ENCODE measurements at regions of chr4 and their contacts with region 1.

Region 1: DNA sequence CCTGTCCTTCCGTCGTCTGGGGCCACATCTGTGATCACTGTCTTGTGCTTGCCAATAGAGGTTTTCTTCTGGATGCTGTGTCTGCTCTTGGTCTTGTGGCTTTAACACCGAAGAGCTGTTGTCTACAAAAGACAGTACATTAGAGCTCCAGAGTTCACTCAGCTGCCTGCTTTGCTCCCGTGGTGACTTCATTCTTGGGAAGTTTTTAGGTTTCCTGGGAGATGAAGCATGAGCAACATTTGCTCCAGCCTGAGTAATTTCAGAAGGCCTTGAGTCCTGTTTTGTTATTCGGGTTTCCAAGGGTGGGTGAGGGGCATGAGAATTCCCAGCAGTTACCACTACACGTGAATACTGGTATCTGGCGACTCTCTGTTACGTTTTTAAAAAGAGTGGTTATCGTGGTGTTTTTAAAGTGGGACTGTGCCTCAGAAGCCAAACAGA is 189.2 kb downstream of the SHROOM3 start:
- DNase-seq: peak; percentile 41
- H3K4me3 Mint-ChIP-seq: peak overlapping the region; percentile 31
- H3K27ac Mint-ChIP-seq: peak overlapping the region; percentile 93
- H3K4me1 Mint-ChIP-seq: peaks cover 37% of the 10 kb centered on the region
- H3K27me3 Mint-ChIP-seq: no peaks in the 10 kb centered on the region
- CTCF ChIP-seq: no peak

Region 2: DNA sequence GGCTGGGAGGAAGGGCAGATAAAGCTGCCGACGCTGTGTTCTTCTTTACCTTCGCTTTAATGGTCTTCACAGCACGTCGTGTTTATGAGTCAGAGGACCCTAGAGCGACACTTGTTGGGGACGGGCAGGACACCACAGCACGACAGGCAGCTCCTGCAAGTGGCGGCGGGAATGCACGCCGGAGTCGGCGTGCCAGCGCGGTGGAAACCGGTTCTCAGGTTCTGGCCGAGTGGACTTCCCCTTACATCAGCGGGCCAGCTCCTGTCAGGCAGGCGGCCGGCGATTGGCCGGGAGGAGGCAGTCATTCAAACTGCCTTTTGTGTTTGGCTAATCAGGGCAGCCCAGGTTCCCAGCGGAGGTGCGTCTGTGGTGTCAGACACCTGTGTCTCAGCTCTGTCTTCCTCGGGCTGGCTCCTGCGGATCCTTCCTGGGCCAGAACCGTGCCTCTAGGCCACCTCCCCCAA is 38.3 kb before region 1 on chr4:
- CTCF ChIA-PET with region 1: interaction called, 5 read pairs
- POLR2A ChIA-PET with region 1: interaction called, 4 read pairs
- intact Hi-C with region 1: loop called (anchors 5 kb)
- DNase-seq: peak; percentile 85
- H3K4me3 Mint-ChIP-seq: peak overlapping the region; percentile 72
- H3K27ac Mint-ChIP-seq: peak overlapping the region; percentile 70
- H3K4me1 Mint-ChIP-seq: peaks cover 29% of the 10 kb centered on the region
- H3K27me3 Mint-ChIP-seq: no peaks in the 10 kb centered on the region
- CTCF ChIP-seq: peak; percentile 17

Region 3: DNA sequence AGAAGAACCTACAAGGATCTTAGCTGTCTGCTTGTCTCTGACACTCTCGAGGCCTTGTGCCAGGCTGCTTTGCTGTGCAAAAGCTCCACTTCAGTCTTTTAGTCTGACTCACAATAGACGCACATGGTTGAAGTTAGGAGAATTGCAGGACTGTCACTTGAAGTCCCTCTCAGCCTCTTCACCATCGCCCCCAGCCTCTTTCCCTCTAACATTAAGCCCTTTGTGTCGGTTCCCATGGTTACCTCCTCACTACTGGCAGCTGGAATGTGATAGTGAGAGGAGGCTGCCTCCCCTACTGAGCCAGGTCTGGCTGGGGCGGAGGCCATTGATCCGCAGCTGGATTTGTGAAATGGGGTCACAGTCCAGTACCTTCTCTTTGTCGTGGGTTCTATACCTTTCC is 71.8 kb after region 1 on chr4:
- CTCF ChIA-PET with region 1: no interaction called
- POLR2A ChIA-PET with region 1: no interaction called
- intact Hi-C with region 1: no loop called
- DNase-seq: no peak
- H3K4me3 Mint-ChIP-seq: no peak overlapping the region
- H3K27ac Mint-ChIP-seq: no peak overlapping the region
- H3K4me1 Mint-ChIP-seq: peaks cover 31% of the 10 kb centered on the region
- H3K27me3 Mint-ChIP-seq: no peaks in the 10 kb centered on the region
- CTCF ChIP-seq: no peak

Measured in MCF 10A (cell line).